Stomach (tissue), 19 donors: ENCODE measurements at regions of chr7 and their contacts with region 1.

Region 1: DNA sequence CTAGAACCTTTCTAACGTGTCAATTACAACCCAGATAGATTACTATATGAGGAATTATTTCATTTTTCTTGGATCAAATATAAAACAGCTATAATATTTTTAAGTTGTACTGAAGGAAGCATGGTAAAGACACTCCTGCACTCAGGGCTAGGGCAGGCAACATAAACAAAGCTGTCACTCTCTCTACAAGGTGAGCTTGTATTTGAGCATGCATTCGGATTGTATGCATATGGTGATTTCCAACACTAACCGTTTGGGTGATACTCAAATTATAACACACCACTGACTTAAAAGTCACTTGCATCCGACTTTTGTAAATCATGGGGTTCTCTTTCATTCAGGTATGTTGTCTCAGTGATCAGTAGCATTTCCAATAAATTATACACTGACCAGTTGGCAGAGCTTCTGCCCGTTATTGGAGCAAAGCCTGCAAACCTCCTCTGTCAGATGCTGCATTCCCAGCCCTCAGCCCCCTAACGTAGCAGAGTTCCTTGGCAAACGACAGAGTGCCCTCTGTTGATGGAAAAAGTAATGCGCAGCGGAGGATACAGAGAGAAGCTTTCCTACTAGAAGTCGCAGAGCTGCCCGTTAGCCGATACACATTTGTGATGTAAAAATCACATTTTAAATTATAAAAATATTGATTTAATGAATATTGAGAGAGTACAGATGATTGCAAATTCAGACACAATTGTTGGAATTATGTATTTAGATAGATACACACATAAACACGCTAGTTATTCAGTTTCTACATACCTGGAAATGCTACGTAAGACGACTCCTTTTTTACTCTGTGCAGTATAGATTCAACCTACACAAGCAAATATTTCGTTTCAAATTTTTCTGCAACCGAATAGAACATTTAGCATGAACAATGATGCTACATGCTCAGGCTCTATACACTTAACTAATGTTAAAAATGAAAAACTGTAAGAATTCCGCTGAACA is 173.9 kb upstream of the SP4 start:
- DNase-seq: peak; percentile 63 to 90
- H3K4me3 ChIP-seq: no peak overlapping the region
- H3K27ac ChIP-seq: no peak overlapping the region
- H3K4me1 ChIP-seq: peaks cover 0 to 13% (median 6%) of the 10 kb centered on the region in 4 donors
- H3K27me3 ChIP-seq: peaks cover 0 to 78% (median 33%) of the 10 kb centered on the region in 3 donors
- CTCF ChIP-seq: peak in 4 of 7 experiments; percentile 32 to 55 (median 42)
- EP300 ChIP-seq: no peak
- POLR2A ChIP-seq: no peak

Region 2: GRCh38 chr7:20798081-20798693 is 455.8 kb before region 1 on chr7:
- intact Hi-C with region 1: loop called (anchors 10 kb)
- DNase-seq: peak; percentile 73 to 83
- H3K4me3 ChIP-seq: peak overlapping the region; percentile 45 to 67 (median 58)
- H3K27ac ChIP-seq: peak overlapping the region in 3 of 5 donors; percentile 18 to 52 (median 40)
- H3K4me1 ChIP-seq: peaks cover 14 to 27% (median 21%) of the 10 kb centered on the region in 4 donors
- H3K27me3 ChIP-seq: peaks cover 41 to 96% (median 70%) of the 10 kb centered on the region in 3 donors
- CTCF ChIP-seq: no peak
- EP300 ChIP-seq: no peak
- POLR2A ChIP-seq: no peak

Region 3: GRCh38 chr7:21507626-21508343 is 253.8 kb after region 1 on chr7:
- intact Hi-C with region 1: loop called (anchors 5 kb)
- DNase-seq: peak; percentile 45 to 51
- H3K4me3 ChIP-seq: no peak overlapping the region
- H3K27ac ChIP-seq: no peak overlapping the region
- H3K4me1 ChIP-seq: peaks cover 0 to 5% (median 0%) of the 10 kb centered on the region in 4 donors
- H3K27me3 ChIP-seq: no peaks in the 10 kb centered on the region
- CTCF ChIP-seq: peak in 5 of 7 experiments; percentile 41 to 84 (median 70)
- EP300 ChIP-seq: no peak
- POLR2A ChIP-seq: no peak

Region 4: GRCh38 chr7:21538938-21539495 is 285.0 kb after region 1 on chr7:
- intact Hi-C with region 1: no loop called
- DNase-seq: no peak
- H3K4me3 ChIP-seq: no peak overlapping the region
- H3K27ac ChIP-seq: no peak overlapping the region
- H3K4me1 ChIP-seq: peaks cover 13 to 16% (median 15%) of the 10 kb centered on the region in 4 donors
- H3K27me3 ChIP-seq: peaks cover 0 to 41% (median 17%) of the 10 kb centered on the region in 3 donors
- CTCF ChIP-seq: no peak
- EP300 ChIP-seq: no peak
- POLR2A ChIP-seq: no peak